Activated B cell treated with CpG ODN at 0.5 μM for 24 hours (primary cell): ENCODE measurements at regions of chr5 and their contacts with region 1.

Region 1: GRCh38 chr5:148383564-148384379 is at the start of gene FBXO38:
- DNase-seq: peak; percentile 92
- ATAC-seq: peak; percentile 97
- H3K4me3 Mint-ChIP-seq: peak within 1 kb of the TSS; percentile 97
- H3K27ac Mint-ChIP-seq: peak within 1 kb of the TSS; percentile 99
- H3K4me1 Mint-ChIP-seq: peaks cover 50% of the 10 kb centered on the region
- H3K27me3 Mint-ChIP-seq: no peaks in the 10 kb centered on the region
- CTCF ChIP-seq: no peak
- total RNA-seq, gene FBXO38: 62.8 and 81.9 TPM in 2 replicates

Region 2: DNA sequence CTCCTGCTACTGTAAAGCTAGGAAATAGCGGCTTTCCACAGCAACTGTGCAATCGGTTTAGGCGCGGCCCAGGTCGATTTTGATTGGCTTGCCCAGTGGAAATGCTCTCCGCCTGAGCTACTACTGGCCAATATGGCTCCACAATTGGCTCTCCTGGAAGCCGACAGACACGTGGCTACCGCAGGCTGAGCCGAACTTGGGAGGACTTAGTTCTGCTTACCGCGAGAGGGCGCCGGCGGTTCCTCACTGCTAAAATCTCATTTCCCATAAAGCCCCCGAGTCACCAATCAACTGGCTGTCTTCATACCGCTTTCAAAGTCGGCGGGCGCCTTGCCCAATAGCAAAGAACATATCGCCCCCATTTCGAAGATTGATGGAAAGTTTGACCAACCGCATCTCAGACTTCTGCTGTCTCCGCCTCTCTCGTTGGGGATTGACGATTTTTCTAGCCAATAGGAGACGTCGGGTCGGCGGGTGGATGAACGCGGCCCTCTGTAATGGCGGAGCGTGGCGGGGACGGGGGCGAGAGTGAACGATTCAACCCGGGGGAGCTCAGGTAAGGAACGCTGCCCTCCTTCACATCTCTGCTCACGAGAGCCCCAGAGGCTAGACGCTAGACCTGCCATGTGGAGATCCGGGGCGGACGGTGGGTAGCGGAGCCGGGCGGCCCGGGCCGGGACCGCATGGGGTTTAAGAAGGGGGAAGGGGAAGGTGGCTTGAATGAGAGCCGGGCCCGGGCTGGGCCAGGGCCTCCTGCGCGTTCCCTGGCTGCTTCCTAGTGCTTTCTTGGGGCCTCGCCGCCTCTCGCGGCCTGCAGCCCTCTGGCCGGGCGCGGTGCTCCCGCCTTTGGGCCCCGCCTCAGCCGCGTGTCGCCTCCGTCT is 1936.7 kb before region 1 on chr5 and contains the start of gene TCERG1:
- CTCF ChIA-PET with region 1: no interaction called
- POLR2A ChIA-PET with region 1: no interaction called
- intact Hi-C with region 1: loop called (anchors 2 kb)
- DNase-seq: peak; percentile 89
- ATAC-seq: peak; percentile 89
- H3K4me3 Mint-ChIP-seq: peak within 1 kb of the TSS; percentile 99
- H3K27ac Mint-ChIP-seq: peak within 1 kb of the TSS; percentile 99
- H3K4me1 Mint-ChIP-seq: peaks cover 47% of the 10 kb centered on the region
- H3K27me3 Mint-ChIP-seq: no peaks in the 10 kb centered on the region
- CTCF ChIP-seq: peak; percentile 33
- total RNA-seq, gene TCERG1: 107 and 114 TPM in 2 replicates

Region 3: GRCh38 chr5:147949711-147950573 is 433.8 kb before region 1 on chr5:
- CTCF ChIA-PET with region 1: no interaction called
- POLR2A ChIA-PET with region 1: no interaction called
- intact Hi-C with region 1: loop called (anchors 5 kb)
- DNase-seq: no peak
- ATAC-seq: no peak
- H3K4me3 Mint-ChIP-seq: no peak overlapping the region
- H3K27ac Mint-ChIP-seq: no peak overlapping the region
- H3K4me1 Mint-ChIP-seq: no peaks in the 10 kb centered on the region
- H3K27me3 Mint-ChIP-seq: peaks cover 2% of the 10 kb centered on the region
- CTCF ChIP-seq: no peak

Region 4: DNA sequence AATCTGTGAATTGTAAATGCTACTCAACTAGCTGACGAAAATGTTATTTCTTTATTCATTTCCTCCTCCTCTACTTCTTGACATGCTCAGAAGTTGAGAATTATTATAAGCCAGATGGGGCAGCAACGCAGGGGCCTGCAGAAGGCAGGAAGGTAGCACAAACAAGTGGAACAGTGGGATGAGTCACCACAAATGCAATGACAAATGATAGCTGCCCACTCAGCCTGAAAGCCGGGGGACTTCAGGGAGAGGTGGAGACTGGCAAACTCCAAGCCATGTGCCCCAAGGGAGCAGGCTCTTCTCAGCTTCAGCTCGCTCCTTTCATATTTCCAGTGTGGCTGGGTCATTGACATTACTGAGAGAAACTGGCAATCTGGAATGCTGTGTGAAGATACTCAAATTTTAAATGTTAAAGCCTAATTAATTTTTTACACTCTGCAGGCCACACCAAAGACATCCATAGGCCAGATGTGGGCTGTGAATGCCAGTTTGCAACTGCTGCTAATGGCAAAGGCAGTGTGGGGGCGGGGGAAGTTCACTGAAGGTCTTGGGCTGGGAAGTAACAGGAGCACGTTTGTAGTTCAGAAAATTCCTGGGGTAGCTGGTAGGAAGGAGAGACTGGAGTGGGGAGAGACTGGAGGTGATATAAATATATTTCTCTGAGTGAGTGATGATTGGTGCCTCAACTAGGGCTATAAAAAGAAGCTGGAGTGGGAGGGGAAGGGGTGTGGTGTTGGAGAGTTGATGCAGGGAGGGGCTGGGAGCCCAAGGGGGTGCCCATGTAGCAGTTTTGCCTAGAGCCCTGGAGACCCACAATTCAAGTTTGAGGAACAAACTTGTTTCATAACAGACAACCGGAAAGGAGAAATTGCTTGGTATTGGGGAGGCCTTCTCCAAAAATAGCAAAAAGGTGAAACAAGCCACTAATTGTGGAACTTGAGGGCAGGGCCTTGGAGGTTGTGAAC is 421.8 kb after region 1 on chr5:
- CTCF ChIA-PET with region 1: no interaction called
- POLR2A ChIA-PET with region 1: no interaction called
- intact Hi-C with region 1: loop called (anchors 1 kb)
- DNase-seq: no peak
- ATAC-seq: peak; percentile 28
- H3K4me3 Mint-ChIP-seq: peak overlapping the region; percentile 47
- H3K27ac Mint-ChIP-seq: peak overlapping the region; percentile 88
- H3K4me1 Mint-ChIP-seq: peaks cover 66% of the 10 kb centered on the region
- H3K27me3 Mint-ChIP-seq: no peaks in the 10 kb centered on the region
- CTCF ChIP-seq: no peak

Region 5: GRCh38 chr5:149357370-149358293 is 973.9 kb after region 1 on chr5 and contains the start of gene PCYOX1L:
- CTCF ChIA-PET with region 1: no interaction called
- POLR2A ChIA-PET with region 1: no interaction called
- intact Hi-C with region 1: loop called (anchors 5 kb)
- DNase-seq: peak; percentile 84
- ATAC-seq: peak; percentile 100
- H3K4me3 Mint-ChIP-seq: peak within 1 kb of the TSS; percentile 92
- H3K27ac Mint-ChIP-seq: peak within 1 kb of the TSS; percentile 65
- H3K4me1 Mint-ChIP-seq: peaks cover 16% of the 10 kb centered on the region
- H3K27me3 Mint-ChIP-seq: no peaks in the 10 kb centered on the region
- CTCF ChIP-seq: no peak
- total RNA-seq, gene PCYOX1L: 6.1 and 9.2 TPM in 2 replicates

Region 6: GRCh38 chr5:149960272-149961185 is 1576.8 kb after region 1 on chr5 and contains the start of gene SLC26A2:
- CTCF ChIA-PET with region 1: no interaction called
- POLR2A ChIA-PET with region 1: no interaction called
- intact Hi-C with region 1: loop called (anchors 10 kb)
- DNase-seq: peak; percentile 88
- ATAC-seq: peak; percentile 97
- H3K4me3 Mint-ChIP-seq: peak within 1 kb of the TSS; percentile 98
- H3K27ac Mint-ChIP-seq: peak within 1 kb of the TSS; percentile 98
- H3K4me1 Mint-ChIP-seq: peaks cover 20% of the 10 kb centered on the region
- H3K27me3 Mint-ChIP-seq: no peaks in the 10 kb centered on the region
- CTCF ChIP-seq: no peak
- total RNA-seq, gene SLC26A2: 8.9 and 11.0 TPM in 2 replicates